ENCODE measurements at regions of chr7 and their contacts with region 1.

Region 1: GRCh38 chr7:44183386-44183785 is 5.9 kb downstream of the GCK start:
- DNase-seq: no peak
- ATAC-seq: no peak
- H3K4me3 Mint-ChIP-seq: no peak overlapping the region
- H3K27ac Mint-ChIP-seq: no peak overlapping the region
- H3K4me1 Mint-ChIP-seq: no peaks in the 10 kb centered on the region
- H3K27me3 Mint-ChIP-seq: peaks cover 11% of the 10 kb centered on the region
- CTCF ChIP-seq: no peak

Region 2: GRCh38 chr7:44167920-44168319 is 15.5 kb before region 1 on chr7:
- CTCF ChIA-PET with region 1: no interaction called
- POLR2A ChIA-PET with region 1: no interaction called
- intact Hi-C with region 1: loop called (anchors 2 kb)
- DNase-seq: no peak
- ATAC-seq: peak; percentile 61
- H3K4me3 Mint-ChIP-seq: no peak overlapping the region
- H3K27ac Mint-ChIP-seq: peak overlapping the region; percentile 3
- H3K4me1 Mint-ChIP-seq: peaks cover 15% of the 10 kb centered on the region
- H3K27me3 Mint-ChIP-seq: no peaks in the 10 kb centered on the region
- CTCF ChIP-seq: no peak

Region 3: GRCh38 chr7:44247868-44248651 is 64.7 kb after region 1 on chr7:
- CTCF ChIA-PET with region 1: no interaction called
- POLR2A ChIA-PET with region 1: no interaction called
- intact Hi-C with region 1: no loop called
- DNase-seq: no peak
- ATAC-seq: no peak
- H3K4me3 Mint-ChIP-seq: no peak overlapping the region
- H3K27ac Mint-ChIP-seq: no peak overlapping the region
- H3K4me1 Mint-ChIP-seq: no peaks in the 10 kb centered on the region
- H3K27me3 Mint-ChIP-seq: no peaks in the 10 kb centered on the region
- CTCF ChIP-seq: no peak

Measured in activated B cell treated with CpG ODN at 0.5 μM for 24 hours (primary cell).